Activated B cell treated with CpG ODN at 0.5 μM for 24 hours (primary cell): ENCODE measurements at regions of chr2 and their contacts with region 1.

Region 1: GRCh38 chr2:64260817-64261216 is 116.6 kb upstream of the PELI1 start:
- DNase-seq: peak; percentile 46
- ATAC-seq: peak; percentile 92
- H3K4me3 Mint-ChIP-seq: peak overlapping the region; percentile 70
- H3K27ac Mint-ChIP-seq: peak overlapping the region; percentile 92
- H3K4me1 Mint-ChIP-seq: peaks cover 41% of the 10 kb centered on the region
- H3K27me3 Mint-ChIP-seq: no peaks in the 10 kb centered on the region
- CTCF ChIP-seq: no peak

Region 2: DNA sequence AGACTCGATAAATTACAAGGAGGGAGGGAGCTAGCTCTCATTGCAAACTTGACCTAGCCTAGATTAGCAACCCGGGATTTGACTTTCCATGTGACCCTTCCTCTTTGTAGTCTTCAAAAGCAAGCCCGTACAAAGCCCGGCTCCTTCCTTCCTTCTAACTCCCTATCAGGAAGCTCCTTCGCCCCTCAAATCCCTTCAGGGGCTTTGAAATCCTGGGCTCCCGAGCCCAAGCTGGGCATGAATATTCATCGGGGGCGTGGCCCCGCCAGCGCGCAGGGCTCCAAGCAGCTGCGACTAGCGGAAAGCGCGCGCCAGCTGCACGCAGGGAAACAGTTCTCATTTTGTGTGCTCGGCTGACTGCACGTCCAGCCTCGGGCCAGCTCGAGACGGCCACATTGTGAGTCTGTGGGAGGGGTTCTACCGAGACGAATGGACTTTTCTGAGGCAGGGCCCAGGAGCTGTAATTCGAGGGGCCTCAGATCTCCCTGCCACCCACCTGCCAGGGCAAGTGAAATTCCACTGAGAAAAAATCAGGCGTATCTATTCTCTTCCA is 32.6 kb before region 1 on chr2:
- CTCF ChIA-PET with region 1: no interaction called
- POLR2A ChIA-PET with region 1: interaction called, 8 read pairs
- intact Hi-C with region 1: loop called (anchors 5 kb)
- DNase-seq: peak; percentile 67
- ATAC-seq: peak; percentile 96
- H3K4me3 Mint-ChIP-seq: peak overlapping the region; percentile 93
- H3K27ac Mint-ChIP-seq: peak overlapping the region; percentile 91
- H3K4me1 Mint-ChIP-seq: peaks cover 35% of the 10 kb centered on the region
- H3K27me3 Mint-ChIP-seq: no peaks in the 10 kb centered on the region
- CTCF ChIP-seq: no peak